Caco-2 (cell line): ENCODE measurements at regions of chr15 and their contacts with region 1.

Region 1: GRCh38 chr15:38440353-38441129 is 13.4 kb upstream of the FAM98B start:
- DNase-seq: peak; percentile 85 to 86
- H3K4me3 ChIP-seq: no peak overlapping the region
- H3K4me3 Mint-ChIP-seq: peak overlapping the region; percentile 18
- H3K27ac Mint-ChIP-seq: peak overlapping the region; percentile 60
- H3K4me1 ChIP-seq: peaks cover 42% of the 10 kb centered on the region
- H3K4me1 Mint-ChIP-seq: peaks cover 34% of the 10 kb centered on the region
- H3K27me3 ChIP-seq: no peaks in the 10 kb centered on the region
- H3K27me3 Mint-ChIP-seq: no peaks in the 10 kb centered on the region
- CTCF ChIP-seq: peak; percentile 84 to 86

Region 2: DNA sequence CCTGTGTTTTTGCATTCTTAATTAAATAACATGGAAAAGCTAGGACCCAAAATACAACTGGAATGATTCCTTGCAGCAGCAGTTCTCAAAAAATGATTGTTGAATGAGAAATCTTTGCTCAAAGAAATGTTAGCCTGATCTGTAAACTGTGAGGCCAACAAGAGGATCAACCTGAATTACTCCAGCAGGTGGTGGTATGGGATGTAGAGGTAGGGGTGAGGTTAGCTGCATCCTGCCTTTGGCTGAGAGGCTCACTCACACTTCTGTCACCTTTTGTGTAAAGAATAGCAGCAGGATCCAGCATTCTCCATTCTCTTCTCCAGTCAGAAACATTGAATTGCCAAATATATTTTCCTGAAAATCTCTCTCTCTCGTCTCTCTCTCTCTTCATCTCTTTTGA is 13.2 kb before region 1 on chr15:
- CTCF ChIA-PET with region 1: interaction called, 20 read pairs
- POLR2A ChIA-PET with region 1: no interaction called
- intact Hi-C with region 1: loop called (anchors 1 kb)
- DNase-seq: no peak
- H3K4me3 ChIP-seq: no peak overlapping the region
- H3K4me3 Mint-ChIP-seq: no peak overlapping the region
- H3K27ac Mint-ChIP-seq: no peak overlapping the region
- H3K4me1 ChIP-seq: peaks cover 34% of the 10 kb centered on the region
- H3K4me1 Mint-ChIP-seq: peaks cover 12% of the 10 kb centered on the region
- H3K27me3 ChIP-seq: no peaks in the 10 kb centered on the region
- H3K27me3 Mint-ChIP-seq: no peaks in the 10 kb centered on the region
- CTCF ChIP-seq: no peak

Region 3: GRCh38 chr15:38453971-38454695 is 13.6 kb after region 1 on chr15 and contains the start of gene FAM98B:
- CTCF ChIA-PET with region 1: interaction called, 33 read pairs
- POLR2A ChIA-PET with region 1: interaction called, 38 read pairs
- intact Hi-C with region 1: loop called (anchors 1 kb)
- DNase-seq: peak; percentile 90 to 95
- H3K4me3 ChIP-seq: peak within 1 kb of the TSS; percentile 73
- H3K4me3 Mint-ChIP-seq: peak within 1 kb of the TSS; percentile 76
- H3K27ac Mint-ChIP-seq: peak within 1 kb of the TSS; percentile 93
- H3K4me1 ChIP-seq: peaks cover 19% of the 10 kb centered on the region; the same call in 1 of the 2 replicates
- H3K4me1 Mint-ChIP-seq: no peaks in the 10 kb centered on the region
- H3K27me3 ChIP-seq: no peaks in the 10 kb centered on the region
- H3K27me3 Mint-ChIP-seq: no peaks in the 10 kb centered on the region
- CTCF ChIP-seq: peak in 1 of 2 experiments; percentile 1
- total RNA-seq, gene FAM98B: 45.9 and 47.2 TPM in 2 replicates

Region 4: DNA sequence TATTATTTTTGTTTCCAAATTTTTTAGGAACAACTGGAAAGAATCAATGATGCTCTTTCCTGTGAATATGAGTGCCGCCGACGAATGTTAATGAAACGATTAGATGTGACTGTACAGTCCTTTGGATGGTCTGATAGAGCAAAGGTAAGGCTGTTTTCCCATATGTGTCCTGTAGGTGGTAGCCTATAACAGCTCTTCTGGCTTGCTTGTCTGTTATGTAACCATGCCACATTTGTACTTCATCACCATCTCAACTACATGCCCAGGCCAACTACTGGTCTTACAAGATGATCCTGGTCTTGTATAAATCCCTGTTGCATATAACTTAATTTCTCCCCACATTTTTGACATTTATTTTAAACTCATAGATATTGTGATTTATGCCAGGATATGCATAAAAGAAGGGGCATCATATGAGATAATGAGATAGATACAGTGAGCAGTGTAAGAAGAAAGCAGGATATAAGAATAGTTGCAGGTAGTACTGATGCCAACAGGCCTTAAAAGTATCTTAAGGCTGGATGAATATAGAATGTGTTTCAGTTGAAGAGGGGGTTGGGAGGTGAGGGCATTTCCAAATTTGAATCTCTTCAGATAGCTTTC is 33.7 kb after region 1 on chr15:
- CTCF ChIA-PET with region 1: interaction called, 7 read pairs
- POLR2A ChIA-PET with region 1: no interaction called
- intact Hi-C with region 1: loop called (anchors 1 kb)
- DNase-seq: peak in 1 of 2 experiments; percentile 53
- H3K4me3 ChIP-seq: no peak overlapping the region
- H3K4me3 Mint-ChIP-seq: no peak overlapping the region
- H3K27ac Mint-ChIP-seq: no peak overlapping the region
- H3K4me1 ChIP-seq: no peaks in the 10 kb centered on the region
- H3K4me1 Mint-ChIP-seq: no peaks in the 10 kb centered on the region
- H3K27me3 ChIP-seq: no peaks in the 10 kb centered on the region
- H3K27me3 Mint-ChIP-seq: no peaks in the 10 kb centered on the region
- CTCF ChIP-seq: peak; percentile 64 to 66

Region 5: GRCh38 chr15:38490242-38490922 is 49.8 kb after region 1 on chr15:
- CTCF ChIA-PET with region 1: no interaction called
- POLR2A ChIA-PET with region 1: no interaction called
- intact Hi-C with region 1: no loop called
- DNase-seq: no peak
- H3K4me3 ChIP-seq: no peak overlapping the region
- H3K4me3 Mint-ChIP-seq: no peak overlapping the region
- H3K27ac Mint-ChIP-seq: no peak overlapping the region
- H3K4me1 ChIP-seq: no peaks in the 10 kb centered on the region
- H3K4me1 Mint-ChIP-seq: no peaks in the 10 kb centered on the region
- H3K27me3 ChIP-seq: no peaks in the 10 kb centered on the region
- H3K27me3 Mint-ChIP-seq: no peaks in the 10 kb centered on the region
- CTCF ChIP-seq: no peak

Region 6: DNA sequence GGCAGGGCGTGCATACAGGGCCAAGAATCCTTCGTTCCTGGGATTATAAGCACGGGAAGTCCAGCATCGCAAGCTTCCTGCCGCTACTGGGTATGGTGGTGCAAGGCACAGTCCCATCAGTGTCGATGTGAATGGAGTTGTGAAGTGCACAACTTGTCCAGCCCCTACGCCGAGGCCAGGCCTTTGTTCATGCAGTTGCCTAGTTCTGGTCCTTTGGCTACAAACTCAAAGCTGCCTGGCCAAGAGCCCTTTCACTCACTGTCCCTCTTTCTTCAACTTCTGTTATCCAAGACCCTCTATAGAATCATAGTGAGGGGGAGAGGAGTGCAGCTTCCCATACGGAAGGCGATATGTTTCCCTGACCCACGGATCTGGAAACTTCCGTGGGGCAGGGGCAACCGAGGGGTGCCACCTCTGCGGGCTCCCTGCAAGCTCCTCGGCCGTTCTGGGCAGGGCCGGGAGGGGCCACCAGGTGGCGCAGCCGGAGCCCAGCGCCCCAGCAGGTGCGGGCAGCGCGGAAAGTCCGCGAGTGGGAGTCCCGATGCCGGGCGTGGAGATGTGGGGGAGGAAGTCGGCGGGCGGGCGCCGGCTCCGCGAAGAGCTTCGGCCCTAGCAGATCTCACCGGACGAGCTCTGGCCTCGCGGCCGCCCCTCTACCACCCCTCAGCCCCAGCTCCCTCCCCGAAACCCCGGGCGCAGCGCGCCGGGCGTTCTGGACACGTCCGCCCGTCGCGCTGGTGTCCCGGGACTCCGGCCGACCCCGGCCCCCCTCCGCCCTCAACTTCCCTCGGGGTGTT is 123.4 kb after region 1 on chr15:
- CTCF ChIA-PET with region 1: interaction called, 13 read pairs
- POLR2A ChIA-PET with region 1: no interaction called
- intact Hi-C with region 1: loop called (anchors 2 kb)
- DNase-seq: peak; percentile 47 to 83
- H3K4me3 ChIP-seq: peak overlapping the region; percentile 75
- H3K4me3 Mint-ChIP-seq: peak overlapping the region; percentile 88
- H3K27ac Mint-ChIP-seq: no peak overlapping the region
- H3K4me1 ChIP-seq: no peaks in the 10 kb centered on the region
- H3K4me1 Mint-ChIP-seq: no peaks in the 10 kb centered on the region
- H3K27me3 ChIP-seq: no peaks in the 10 kb centered on the region
- H3K27me3 Mint-ChIP-seq: peaks cover 2% of the 10 kb centered on the region
- CTCF ChIP-seq: peak; percentile 88 to 94

Region 7: DNA sequence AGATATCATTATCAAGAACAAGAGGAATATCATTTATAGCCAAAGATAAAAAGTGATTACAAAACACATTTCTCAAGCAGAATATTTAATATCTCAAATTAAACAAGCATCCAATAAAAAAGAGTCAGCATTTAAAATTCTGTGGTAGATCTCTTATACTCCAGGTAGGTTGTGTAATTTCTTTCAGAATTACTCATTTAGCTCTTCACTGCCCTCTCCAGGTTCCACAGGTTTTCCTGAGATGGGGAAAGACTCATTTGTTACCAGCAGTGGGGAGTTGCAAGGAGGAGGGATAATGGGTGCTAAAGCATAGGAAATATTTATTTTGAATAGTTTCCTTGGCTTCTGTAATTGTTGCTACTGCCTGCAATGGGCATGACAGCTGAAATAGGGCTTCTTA is 207.1 kb after region 1 on chr15:
- CTCF ChIA-PET with region 1: interaction called, 4 read pairs
- POLR2A ChIA-PET with region 1: no interaction called
- intact Hi-C with region 1: loop called (anchors 1 kb)
- DNase-seq: peak in 1 of 2 experiments; percentile 41
- H3K4me3 ChIP-seq: no peak overlapping the region
- H3K4me3 Mint-ChIP-seq: no peak overlapping the region
- H3K27ac Mint-ChIP-seq: no peak overlapping the region
- H3K4me1 ChIP-seq: no peaks in the 10 kb centered on the region
- H3K4me1 Mint-ChIP-seq: no peaks in the 10 kb centered on the region
- H3K27me3 ChIP-seq: no peaks in the 10 kb centered on the region
- H3K27me3 Mint-ChIP-seq: no peaks in the 10 kb centered on the region
- CTCF ChIP-seq: peak; percentile 28 to 52

Region 8: DNA sequence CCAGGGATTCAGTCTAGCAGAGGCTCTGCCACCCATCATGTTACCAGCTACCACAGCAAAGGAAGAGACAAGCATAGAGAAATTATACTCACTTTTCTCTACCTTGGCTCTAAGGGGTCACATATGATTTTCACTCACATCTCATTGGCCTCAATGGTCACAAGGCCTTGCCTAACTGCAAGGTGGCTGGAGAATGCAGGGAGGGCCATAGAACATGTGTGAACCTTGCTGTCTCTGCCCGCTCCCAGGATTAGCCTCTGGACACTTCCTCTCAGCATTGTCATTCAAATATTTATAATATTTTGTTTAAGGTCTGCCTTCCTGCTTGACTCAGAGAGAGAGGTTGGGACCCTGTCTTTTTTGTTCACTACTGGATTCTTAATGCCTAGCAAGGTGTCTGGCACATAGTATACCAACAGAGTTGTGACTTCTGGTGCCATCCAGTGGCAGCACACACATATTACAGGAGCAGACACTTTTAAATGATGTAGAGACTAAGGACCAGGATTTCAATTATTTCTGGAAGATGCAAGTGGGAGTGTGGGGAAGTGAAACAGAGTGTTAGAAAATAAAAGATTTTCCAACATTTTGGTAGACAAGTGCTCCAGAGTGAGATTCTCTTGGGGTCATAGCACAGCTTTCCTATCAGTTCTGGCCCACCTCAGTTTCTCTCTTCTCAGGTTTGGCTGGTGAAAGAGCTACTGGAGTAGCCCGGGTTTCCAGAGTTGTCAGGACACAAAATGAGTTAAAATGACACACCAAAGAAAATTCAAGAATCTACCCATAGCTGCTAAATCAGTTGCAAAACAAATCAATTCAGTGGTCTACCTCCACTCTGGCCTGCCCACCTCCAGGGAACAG is 243.1 kb after region 1 on chr15:
- CTCF ChIA-PET with region 1: interaction called, 9 read pairs
- POLR2A ChIA-PET with region 1: no interaction called
- intact Hi-C with region 1: loop called (anchors 1 kb)
- DNase-seq: peak in 1 of 2 experiments; percentile 50
- H3K4me3 ChIP-seq: no peak overlapping the region
- H3K4me3 Mint-ChIP-seq: no peak overlapping the region
- H3K27ac Mint-ChIP-seq: no peak overlapping the region
- H3K4me1 ChIP-seq: no peaks in the 10 kb centered on the region
- H3K4me1 Mint-ChIP-seq: peaks cover 8% of the 10 kb centered on the region
- H3K27me3 ChIP-seq: no peaks in the 10 kb centered on the region
- H3K27me3 Mint-ChIP-seq: peaks cover 3% of the 10 kb centered on the region
- CTCF ChIP-seq: peak; percentile 58 to 65